Heart left ventricle (tissue), 16 donors: ENCODE measurements at regions of chr2 and their contacts with region 1.

Region 1: DNA sequence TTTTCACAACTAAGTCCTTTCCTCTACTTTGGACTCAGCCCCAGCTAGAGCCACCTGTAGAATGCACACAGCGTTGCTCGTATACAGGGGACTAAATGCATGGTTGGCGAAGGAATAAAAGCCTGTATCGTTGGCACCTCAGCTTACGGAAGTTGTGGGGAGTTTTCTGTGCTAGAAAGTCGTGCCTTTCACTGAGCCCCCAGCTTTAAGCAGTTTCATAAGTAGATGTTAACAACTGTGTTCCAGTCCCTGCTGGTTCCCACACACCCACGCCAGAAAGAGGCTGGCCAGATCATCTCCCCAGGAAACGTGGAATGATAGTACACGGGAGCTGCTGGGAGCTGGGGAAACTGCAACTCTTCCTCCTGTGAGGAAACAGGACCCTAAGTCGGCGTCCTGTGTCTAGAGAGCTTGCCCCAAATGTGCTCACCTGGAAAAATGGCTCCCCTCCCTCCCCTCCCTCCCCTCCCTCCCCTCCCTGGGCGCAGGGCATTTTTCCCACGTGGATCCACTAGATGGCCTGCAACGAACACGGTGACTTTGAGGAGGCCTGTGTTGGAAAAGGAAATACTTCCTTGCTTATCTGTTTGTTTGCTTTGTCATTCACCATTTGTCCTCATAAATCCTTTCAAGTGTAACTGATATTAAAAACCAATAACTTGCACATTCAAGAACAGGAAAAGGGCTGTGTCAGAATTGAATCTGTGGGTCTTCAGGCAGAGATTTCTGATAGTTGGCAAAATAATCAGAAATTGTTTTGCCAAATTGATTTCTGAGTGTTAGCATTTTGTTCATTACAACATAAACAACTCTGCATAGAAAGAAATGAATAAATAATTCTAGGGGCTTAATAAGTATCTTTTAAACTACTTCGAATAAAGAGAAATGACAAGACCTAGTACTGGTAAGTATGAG is 43.9 kb upstream of the RFX8 start:
- DNase-seq: peak in 4 of 5 donors; percentile 47 to 72 (median 56)
- ATAC-seq: peak; percentile 63 to 86 (median 75)
- H3K4me3 ChIP-seq: peak overlapping the region in 3 of 12 donors; percentile 19 to 32 (median 25)
- H3K27ac ChIP-seq: peak overlapping the region in 7 of 12 donors; percentile 0 to 67 (median 32)
- H3K4me1 ChIP-seq: peaks cover 0 to 48% (median 20%) of the 10 kb centered on the region in 12 donors
- H3K27me3 ChIP-seq: no peaks in the 10 kb centered on the region
- CTCF ChIP-seq: peak in 10 of 12 donors; percentile 31 to 66 (median 52)
- POLR2A ChIP-seq: no peak

Region 2: GRCh38 chr2:101419096-101419663 is 99.7 kb before region 1 on chr2:
- intact Hi-C with region 1: loop called in 4 of 10 experiments (anchors 5 kb)
- DNase-seq: peak in 4 of 5 donors; percentile 47 to 68 (median 62)
- ATAC-seq: peak; percentile 55 to 89 (median 76)
- H3K4me3 ChIP-seq: no peak overlapping the region
- H3K27ac ChIP-seq: no peak overlapping the region
- H3K4me1 ChIP-seq: peaks cover 0 to 4% (median 0%) of the 10 kb centered on the region in 12 donors
- H3K27me3 ChIP-seq: no peaks in the 10 kb centered on the region
- CTCF ChIP-seq: peak; percentile 66 to 90 (median 83)
- POLR2A ChIP-seq: no peak

Region 3: DNA sequence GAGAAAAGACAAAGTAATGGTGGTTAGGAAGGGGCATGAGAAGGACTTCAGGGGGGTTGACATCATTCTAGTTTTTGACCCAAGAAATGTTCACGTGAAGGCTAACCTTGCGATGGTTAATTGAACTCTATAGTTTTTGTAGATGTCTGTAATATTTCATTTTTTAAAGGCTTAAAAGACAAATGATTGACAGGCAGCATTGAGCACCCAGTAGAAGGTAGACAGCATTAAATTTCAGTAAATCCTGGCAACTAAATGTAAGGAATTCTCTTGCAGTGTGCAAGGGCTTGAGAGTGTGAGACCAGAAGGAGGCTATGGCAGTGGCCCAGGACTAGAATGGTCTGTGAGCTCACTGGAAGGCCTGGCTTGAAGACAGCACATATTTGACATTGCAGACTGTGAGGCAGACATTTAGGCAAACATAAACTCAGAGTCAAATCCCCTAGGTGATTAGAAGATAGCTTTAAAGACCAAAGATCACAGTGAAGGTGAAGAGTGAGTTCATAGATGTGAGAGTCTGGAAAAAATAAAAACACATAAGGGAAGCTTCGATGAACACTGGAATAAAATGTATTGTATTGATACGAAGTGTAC is 78.6 kb after region 1 on chr2:
- intact Hi-C with region 1: loop called in 1 of 10 experiments (anchors 10 kb)
- DNase-seq: peak in 4 of 5 donors; percentile 61 to 76 (median 70)
- ATAC-seq: peak; percentile 95 to 98 (median 97)
- H3K4me3 ChIP-seq: no peak overlapping the region
- H3K27ac ChIP-seq: peak overlapping the region in 6 of 12 donors; percentile 39 to 70 (median 56)
- H3K4me1 ChIP-seq: peaks cover 0 to 14% (median 0%) of the 10 kb centered on the region in 12 donors
- H3K27me3 ChIP-seq: peaks cover 0 to under 1% (median 0%) of the 10 kb centered on the region in 9 donors
- CTCF ChIP-seq: no peak
- POLR2A ChIP-seq: no peak

Region 4: DNA sequence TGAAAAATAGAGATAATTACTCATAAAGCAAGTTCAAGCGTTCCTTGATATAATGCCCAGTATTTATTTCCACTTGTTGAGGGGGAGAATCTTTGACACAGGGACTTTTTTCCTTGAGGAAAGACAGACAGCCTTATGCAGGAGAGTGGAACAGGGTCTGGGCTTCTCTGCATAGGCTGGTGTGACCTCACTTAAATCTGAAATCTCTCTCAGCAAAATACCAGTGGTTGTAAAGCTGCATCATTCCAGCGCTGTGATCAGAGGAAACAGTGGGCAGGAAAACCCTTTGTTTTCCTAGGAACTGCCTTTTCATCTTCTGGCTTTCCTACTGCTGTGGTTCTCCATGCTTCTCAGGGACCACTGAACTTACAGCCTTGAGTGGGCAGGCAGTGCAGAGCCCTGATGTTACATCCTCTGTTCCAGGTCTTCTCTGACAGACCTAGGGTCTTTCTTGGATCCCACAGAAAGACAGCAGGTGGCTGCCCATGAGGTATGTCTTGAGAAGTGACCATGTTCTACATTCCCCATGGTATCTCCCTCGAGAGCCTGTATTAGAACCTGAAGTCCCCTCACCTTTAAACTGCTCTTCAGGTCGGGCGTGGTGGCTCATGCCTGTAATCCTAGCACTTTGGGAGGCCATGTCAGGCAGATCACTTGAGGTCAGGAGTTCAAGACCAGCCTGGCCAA is 161.1 kb after region 1 on chr2:
- intact Hi-C with region 1: loop called in 1 of 10 experiments (anchors 10 kb)
- DNase-seq: no peak
- ATAC-seq: no peak
- H3K4me3 ChIP-seq: no peak overlapping the region
- H3K27ac ChIP-seq: no peak overlapping the region
- H3K4me1 ChIP-seq: no peaks in the 10 kb centered on the region
- H3K27me3 ChIP-seq: no peaks in the 10 kb centered on the region
- CTCF ChIP-seq: no peak
- POLR2A ChIP-seq: no peak

Region 5: DNA sequence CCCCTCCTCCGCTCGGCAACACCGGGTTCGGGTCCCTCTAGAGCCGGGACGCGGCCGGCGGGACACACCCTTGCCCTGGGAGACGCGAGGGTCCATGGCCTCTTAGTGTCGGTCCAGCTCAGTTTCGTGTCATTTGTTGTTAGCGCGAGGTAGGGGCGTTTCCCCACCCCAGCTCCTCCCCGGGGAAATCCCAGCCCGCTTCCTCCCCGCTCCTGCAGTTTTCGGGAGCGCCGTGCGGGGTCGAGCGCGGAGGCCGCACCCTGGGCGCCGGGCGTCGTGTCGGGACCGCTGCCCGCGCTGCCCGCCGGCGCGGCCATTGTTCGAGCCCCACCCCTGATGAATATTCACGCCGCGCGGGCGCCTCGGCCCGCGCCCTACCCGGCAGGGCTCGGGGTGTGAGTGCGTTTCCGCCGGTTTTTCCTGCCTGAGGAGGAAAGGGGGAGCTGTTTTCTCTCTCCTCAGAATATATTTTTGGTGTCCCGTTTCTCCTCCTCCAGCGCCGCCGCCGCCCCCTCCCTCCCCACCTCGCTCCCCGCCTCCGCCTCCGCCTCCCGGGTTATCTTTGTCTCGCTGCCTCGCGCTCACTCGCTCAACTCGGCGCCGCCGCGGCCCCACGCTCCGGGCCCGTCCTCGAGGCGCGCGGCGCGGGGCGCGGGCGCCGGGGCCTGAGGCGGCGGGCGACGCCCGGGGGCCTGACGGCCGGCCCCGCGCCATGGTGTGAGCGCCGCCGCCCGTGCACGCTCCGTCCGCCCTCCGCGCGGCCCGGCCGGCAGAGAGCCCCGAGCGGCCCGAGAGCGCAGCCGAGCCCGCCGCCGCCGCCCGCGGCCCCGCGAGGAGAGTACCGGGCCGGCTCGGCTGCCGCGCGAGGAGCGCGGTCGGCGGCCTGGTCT is 178.5 kb after region 1 on chr2 and contains the start of gene MAP4K4:
- intact Hi-C with region 1: loop called in 8 of 10 experiments (anchors 2 to 10 kb)
- DNase-seq: peak; percentile 89 to 93 (median 90)
- ATAC-seq: peak; percentile 85 to 91 (median 86)
- H3K4me3 ChIP-seq: peak within 1 kb of the TSS; percentile 62 to 88 (median 72)
- H3K27ac ChIP-seq: peak within 1 kb of the TSS; percentile 64 to 95 (median 92)
- H3K4me1 ChIP-seq: peaks cover 0 to 42% (median 25%) of the 10 kb centered on the region in 12 donors
- H3K27me3 ChIP-seq: no peaks in the 10 kb centered on the region
- CTCF ChIP-seq: peak in 11 of 12 donors; percentile 15 to 63 (median 38)
- POLR2A ChIP-seq: peak in 1 of 2 donors; percentile 54
- total RNA-seq, gene MAP4K4: 65.3 to 146 (median 114) TPM

Region 6: DNA sequence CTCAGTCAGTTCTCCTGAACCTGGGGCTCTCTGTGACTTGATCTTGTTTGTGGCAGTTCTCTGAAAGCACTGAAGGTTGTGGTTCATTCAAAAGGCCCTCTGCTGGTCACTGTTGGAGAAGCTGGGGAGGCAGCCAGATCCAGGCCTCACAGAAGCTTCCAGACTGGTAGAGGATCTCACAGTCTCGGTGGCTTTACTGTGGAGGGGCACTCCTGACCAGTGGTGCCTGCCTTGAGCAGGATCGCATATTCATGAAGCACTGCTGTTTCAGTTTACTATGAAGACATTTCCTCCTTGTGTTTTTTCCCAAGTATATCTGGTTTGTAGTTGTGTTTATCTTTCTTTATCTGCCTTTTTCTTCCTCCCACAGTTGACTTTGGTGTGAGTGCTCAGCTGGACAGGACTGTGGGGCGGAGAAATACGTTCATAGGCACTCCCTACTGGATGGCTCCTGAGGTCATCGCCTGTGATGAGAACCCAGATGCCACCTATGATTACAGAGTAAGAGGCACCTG is 312.6 kb after region 1 on chr2:
- intact Hi-C with region 1: loop called (anchors 2 to 5 kb)
- DNase-seq: peak in 4 of 5 donors; percentile 72 to 79 (median 76)
- ATAC-seq: peak; percentile 70 to 84 (median 80)
- H3K4me3 ChIP-seq: no peak overlapping the region
- H3K27ac ChIP-seq: peak overlapping the region in 10 of 12 donors; percentile 40 to 76 (median 56)
- H3K4me1 ChIP-seq: peaks cover 9 to 58% (median 53%) of the 10 kb centered on the region in 12 donors
- H3K27me3 ChIP-seq: no peaks in the 10 kb centered on the region
- CTCF ChIP-seq: peak; percentile 64 to 87 (median 78)
- POLR2A ChIP-seq: no peak